ENCODE measurements at regions of chr5 and their contacts with region 1.

Region 1: GRCh38 chr5:56200856-56201666 is 32.1 kb downstream of the ANKRD55 start:
- DNase-seq: peak; percentile 58
- H3K4me3 ChIP-seq: no peak overlapping the region
- H3K27ac ChIP-seq: no peak overlapping the region
- H3K4me1 ChIP-seq: no peaks in the 10 kb centered on the region
- H3K27me3 ChIP-seq: no peaks in the 10 kb centered on the region
- CTCF ChIP-seq: peak; percentile 32 to 81 (median 76)
- POLR2A ChIP-seq: no peak

Region 2: DNA sequence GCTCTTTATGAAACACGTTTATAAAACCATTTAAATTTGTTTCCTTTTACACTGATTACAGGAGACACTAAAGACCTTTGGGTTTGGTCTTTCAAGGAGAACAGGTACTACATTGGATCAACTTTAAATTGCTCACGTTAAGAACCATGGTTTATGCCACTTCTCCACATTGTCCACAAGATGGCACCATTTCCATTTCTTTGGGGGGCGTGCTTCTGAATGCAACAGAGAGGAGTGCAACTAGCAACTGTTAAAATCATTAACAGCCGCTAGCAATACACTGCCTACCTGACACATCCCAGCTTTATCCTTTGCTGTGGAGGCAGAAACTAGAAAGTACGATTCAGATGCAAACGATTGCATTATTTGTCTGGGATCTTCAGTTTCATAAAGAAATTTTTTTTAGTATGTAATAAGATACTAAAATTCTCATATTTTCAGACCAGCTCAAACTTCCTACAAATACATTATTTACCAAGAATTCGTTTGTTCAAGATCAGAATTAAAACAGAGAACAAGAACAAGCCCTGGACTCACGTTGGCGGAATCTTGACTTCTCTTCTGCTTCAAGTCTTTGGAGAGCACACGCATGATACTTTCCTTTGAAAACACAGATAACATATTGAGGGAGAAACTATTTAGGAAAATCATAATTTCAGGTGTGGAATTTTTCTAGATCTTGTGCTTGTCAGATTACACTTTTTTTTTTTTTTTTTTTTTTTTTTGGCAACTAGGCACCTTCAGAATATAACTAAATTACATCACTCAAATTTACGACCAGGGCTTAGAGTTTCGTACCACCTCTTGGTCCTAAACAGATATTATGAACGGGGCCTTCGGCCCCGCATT is 1028.8 kb before region 1 on chr5:
- intact Hi-C with region 1: loop called (anchors 10 kb)
- DNase-seq: peak; percentile 46
- H3K4me3 ChIP-seq: peak overlapping the region; percentile 30 to 39
- H3K27ac ChIP-seq: no peak overlapping the region
- H3K4me1 ChIP-seq: peaks cover 4% of the 10 kb centered on the region
- H3K27me3 ChIP-seq: no peaks in the 10 kb centered on the region
- CTCF ChIP-seq: peak; percentile 49 to 84 (median 80)
- POLR2A ChIP-seq: no peak

Region 3: GRCh38 chr5:55711968-55712859 is 488.8 kb before region 1 on chr5 and contains the start of gene SLC38A9:
- intact Hi-C with region 1: loop called (anchors 5 kb)
- DNase-seq: peak; percentile 94
- H3K4me3 ChIP-seq: peak within 1 kb of the TSS; percentile 52 to 81
- H3K27ac ChIP-seq: peak within 1 kb of the TSS; percentile 12 to 62
- H3K4me1 ChIP-seq: peaks cover 7% of the 10 kb centered on the region
- H3K27me3 ChIP-seq: no peaks in the 10 kb centered on the region
- CTCF ChIP-seq: peak in 2 of 4 experiments; percentile 12 to 19
- POLR2A ChIP-seq: peak; percentile 40
- total RNA-seq, gene SLC38A9: 14.8 to 20.8 TPM

Region 4: DNA sequence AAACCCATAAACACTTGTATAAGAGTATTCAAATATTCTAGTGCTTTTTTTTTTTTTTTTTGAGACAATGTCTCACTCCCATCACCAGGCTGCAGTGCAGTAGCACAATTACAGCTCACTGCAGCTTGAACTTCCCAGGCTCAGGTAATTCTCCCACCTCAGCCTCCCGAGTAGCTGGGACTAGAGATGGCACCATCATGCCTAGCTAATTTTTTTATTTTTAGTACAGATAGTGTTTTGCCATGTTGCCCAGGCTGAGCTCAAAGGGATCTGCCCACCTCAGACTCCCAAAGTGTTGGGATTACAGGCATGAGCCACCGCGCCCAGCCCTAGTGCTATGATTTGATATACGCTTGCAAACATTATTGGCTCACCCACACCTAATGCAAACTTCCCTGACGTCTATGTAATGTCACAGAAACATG is 218.1 kb before region 1 on chr5:
- intact Hi-C with region 1: loop called (anchors 5 kb)
- DNase-seq: no peak
- H3K4me3 ChIP-seq: no peak overlapping the region
- H3K27ac ChIP-seq: no peak overlapping the region
- H3K4me1 ChIP-seq: peaks cover 3% of the 10 kb centered on the region
- H3K27me3 ChIP-seq: no peaks in the 10 kb centered on the region
- CTCF ChIP-seq: peak in 3 of 4 experiments; percentile 10 to 33 (median 33)
- POLR2A ChIP-seq: no peak

Region 5: DNA sequence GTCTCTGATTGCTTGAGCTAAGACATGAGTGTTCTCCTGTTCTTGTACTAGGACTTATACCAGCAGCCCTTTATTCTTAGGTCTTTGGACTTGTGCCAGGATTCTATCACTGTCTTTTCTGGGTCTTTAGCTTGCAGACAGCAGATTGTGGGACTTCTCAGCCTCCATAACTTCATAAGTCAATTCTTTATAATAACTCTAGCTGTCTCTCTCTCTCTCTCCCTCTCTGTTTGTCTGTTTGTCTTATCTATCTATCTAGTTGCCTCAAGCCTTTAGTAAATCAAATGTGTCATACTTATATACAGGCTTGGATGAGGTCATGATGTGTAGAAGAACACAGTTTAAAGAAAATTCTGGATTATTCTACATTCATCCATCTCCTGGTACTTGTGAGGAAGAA is 43.6 kb after region 1 on chr5:
- intact Hi-C with region 1: no loop called
- DNase-seq: no peak
- H3K4me3 ChIP-seq: no peak overlapping the region
- H3K27ac ChIP-seq: no peak overlapping the region
- H3K4me1 ChIP-seq: no peaks in the 10 kb centered on the region
- H3K27me3 ChIP-seq: no peaks in the 10 kb centered on the region
- CTCF ChIP-seq: no peak
- POLR2A ChIP-seq: no peak